CD4-positive, alpha-beta memory T cell (primary cell): ENCODE measurements at regions of chr3 and their contacts with region 1.

Region 1: DNA sequence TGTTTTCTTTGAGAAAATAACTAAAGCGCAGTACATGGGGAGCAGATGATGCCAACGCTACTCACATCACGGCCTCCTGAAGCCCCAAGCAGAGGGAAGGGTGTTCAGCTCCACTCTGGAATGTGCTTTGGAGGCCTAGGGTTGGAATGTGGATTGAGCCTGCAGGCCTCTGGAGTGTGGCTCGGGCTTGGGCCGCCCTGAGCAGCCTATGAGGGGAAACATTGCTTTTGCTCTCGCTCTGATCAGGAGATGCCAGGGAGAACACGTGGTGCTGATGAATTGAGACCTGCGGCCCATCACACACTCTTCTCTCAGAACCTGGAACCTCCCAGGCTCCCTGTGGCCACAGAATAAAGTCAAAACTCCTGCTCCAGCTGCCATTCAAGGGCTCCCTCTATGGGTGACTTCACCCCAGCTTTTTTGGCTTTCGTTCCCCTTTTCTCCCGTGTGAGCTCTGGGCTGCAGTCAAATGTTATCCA is 23.3 kb downstream of the CCDC13 start:
- DNase-seq: no peak
- H3K4me3 ChIP-seq: no peak overlapping the region
- H3K4me3 Mint-ChIP-seq: no peak overlapping the region
- H3K27ac ChIP-seq: no peak overlapping the region
- H3K27ac Mint-ChIP-seq: peak overlapping the region in 2 of 7 donors; percentile 53 to 65
- H3K4me1 ChIP-seq: peaks cover 24% of the 10 kb centered on the region
- H3K4me1 Mint-ChIP-seq: peaks cover 20 to 42% (median 31%) of the 10 kb centered on the region in 4 donors
- H3K27me3 ChIP-seq: no peaks in the 10 kb centered on the region
- H3K27me3 Mint-ChIP-seq: no peaks in the 10 kb centered on the region

Region 2: GRCh38 chr3:42572278-42572677 is 177.5 kb before region 1 on chr3:
- CTCF ChIA-PET with region 1: interaction called, 12 read pairs
- POLR2A ChIA-PET with region 1: no interaction called
- intact Hi-C with region 1: loop called (anchors 1 kb)
- DNase-seq: peak in 1 of 5 donors; percentile 18
- H3K4me3 ChIP-seq: no peak overlapping the region
- H3K4me3 Mint-ChIP-seq: no peak overlapping the region
- H3K27ac ChIP-seq: no peak overlapping the region
- H3K27ac Mint-ChIP-seq: peak overlapping the region in 3 of 7 donors; percentile 48 to 80 (median 76)
- H3K4me1 ChIP-seq: peaks cover 3% of the 10 kb centered on the region
- H3K4me1 Mint-ChIP-seq: peaks cover 11 to 38% (median 24%) of the 10 kb centered on the region in 4 donors
- H3K27me3 ChIP-seq: no peaks in the 10 kb centered on the region
- H3K27me3 Mint-ChIP-seq: no peaks in the 10 kb centered on the region

Region 3: DNA sequence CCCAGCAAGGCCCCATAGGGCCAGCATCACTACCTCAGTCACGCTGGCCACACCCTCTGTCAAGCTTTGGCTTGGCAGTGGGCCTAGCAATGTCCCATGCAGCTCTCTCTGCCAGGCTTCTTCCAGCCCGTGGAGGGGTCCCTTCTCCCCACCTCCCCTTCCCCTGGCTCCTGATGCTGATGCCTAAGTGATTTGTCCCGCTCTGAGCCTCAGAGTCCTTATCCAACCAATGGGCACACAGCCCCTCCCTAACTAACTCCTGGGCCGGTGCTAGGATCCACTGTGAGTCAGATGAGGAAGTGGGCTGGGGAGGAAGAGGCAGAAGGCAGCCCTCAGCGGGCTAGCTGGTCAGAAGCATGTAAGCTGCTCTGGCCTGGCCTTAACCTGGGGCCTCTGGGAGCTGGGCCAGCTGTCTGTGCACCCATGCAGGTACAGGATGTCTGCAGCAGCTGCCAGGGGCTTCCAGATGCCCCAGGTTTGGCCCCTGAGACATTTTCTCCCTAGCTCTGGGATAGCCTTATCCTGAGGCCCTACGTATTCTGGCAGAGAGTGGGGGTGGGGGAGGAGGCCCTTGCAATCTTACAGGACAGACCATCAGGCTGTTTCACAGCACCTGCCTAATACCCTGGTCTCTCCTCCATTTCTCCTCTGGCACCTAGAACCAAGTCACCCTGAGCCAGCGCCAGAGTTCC is 97.0 kb before region 1 on chr3:
- CTCF ChIA-PET with region 1: interaction called, 3 read pairs
- POLR2A ChIA-PET with region 1: interaction called, 3 read pairs
- intact Hi-C with region 1: loop called (anchors 10 kb)
- DNase-seq: no peak
- H3K4me3 ChIP-seq: no peak overlapping the region
- H3K4me3 Mint-ChIP-seq: peak overlapping the region; percentile 62 to 95 (median 86)
- H3K27ac ChIP-seq: no peak overlapping the region
- H3K27ac Mint-ChIP-seq: peak overlapping the region in 6 of 7 donors; percentile 11 to 79 (median 30)
- H3K4me1 ChIP-seq: peaks cover 28% of the 10 kb centered on the region
- H3K4me1 Mint-ChIP-seq: peaks cover 6 to 29% (median 20%) of the 10 kb centered on the region in 4 donors
- H3K27me3 ChIP-seq: no peaks in the 10 kb centered on the region
- H3K27me3 Mint-ChIP-seq: no peaks in the 10 kb centered on the region

Region 4: GRCh38 chr3:42735019-42735418 is 14.8 kb before region 1 on chr3:
- CTCF ChIA-PET with region 1: interaction called, 76 read pairs
- POLR2A ChIA-PET with region 1: no interaction called
- intact Hi-C with region 1: no loop called
- DNase-seq: no peak
- H3K4me3 ChIP-seq: no peak overlapping the region
- H3K4me3 Mint-ChIP-seq: no peak overlapping the region
- H3K27ac ChIP-seq: no peak overlapping the region
- H3K27ac Mint-ChIP-seq: no peak overlapping the region
- H3K4me1 ChIP-seq: no peaks in the 10 kb centered on the region
- H3K4me1 Mint-ChIP-seq: no peaks in the 10 kb centered on the region
- H3K27me3 ChIP-seq: no peaks in the 10 kb centered on the region
- H3K27me3 Mint-ChIP-seq: no peaks in the 10 kb centered on the region